ENCODE measurements at regions of chr12 and their contacts with region 1.

Region 1: GRCh38 chr12:26732005-26732908 is 100.7 kb downstream of the ITPR2 start:
- DNase-seq: peak; percentile 48
- H3K4me3 ChIP-seq: peak overlapping the region; percentile 8
- H3K27ac ChIP-seq: no peak overlapping the region
- H3K4me1 ChIP-seq: peaks cover 21% of the 10 kb centered on the region
- CTCF ChIP-seq: no peak

Region 2: GRCh38 chr12:26748741-26749431 is 16.6 kb after region 1 on chr12:
- CTCF ChIA-PET with region 1: no interaction called
- POLR2A ChIA-PET with region 1: interaction called, 12 read pairs
- intact Hi-C with region 1: no loop called
- DNase-seq: no peak
- H3K4me3 ChIP-seq: no peak overlapping the region
- H3K27ac ChIP-seq: no peak overlapping the region
- H3K4me1 ChIP-seq: no peaks in the 10 kb centered on the region
- CTCF ChIP-seq: no peak

Region 3: DNA sequence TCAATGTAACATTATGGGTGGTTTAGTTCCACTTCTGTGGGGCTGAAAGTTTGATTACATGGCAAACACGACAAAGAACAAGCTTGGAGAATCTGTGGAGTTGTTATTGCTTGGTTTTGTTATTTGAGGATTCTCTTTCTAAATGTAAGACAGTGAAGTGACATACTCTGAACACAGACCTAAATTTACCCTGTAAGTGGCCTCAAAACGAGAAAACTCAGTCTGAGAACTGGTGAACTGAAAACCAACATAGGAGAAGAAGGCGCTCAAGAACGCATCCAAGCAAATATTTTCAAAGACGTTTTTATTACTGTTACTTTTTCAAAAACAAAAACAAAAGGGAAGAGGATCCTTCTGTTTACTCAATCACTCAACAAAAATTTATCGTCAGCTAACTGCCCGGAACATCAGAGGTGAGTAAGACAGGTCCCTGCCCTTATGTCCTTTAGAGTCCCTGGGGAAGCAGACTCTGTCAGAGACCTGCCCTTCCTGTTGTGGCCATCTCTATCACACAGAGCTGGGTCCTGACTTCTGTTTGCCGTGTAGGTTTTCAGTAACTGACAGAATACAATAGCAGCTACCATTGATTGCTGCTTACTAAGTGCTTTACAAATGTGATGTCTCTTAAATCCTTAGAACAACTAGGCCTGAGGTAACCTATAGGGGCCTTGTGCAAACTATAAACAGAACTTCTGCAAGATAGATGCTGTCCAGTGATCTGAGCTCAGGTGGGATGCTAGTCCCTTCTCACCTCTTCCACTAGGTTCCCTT is 429.4 kb after region 1 on chr12:
- CTCF ChIA-PET with region 1: no interaction called
- POLR2A ChIA-PET with region 1: no interaction called
- intact Hi-C with region 1: no loop called
- DNase-seq: no peak
- H3K4me3 ChIP-seq: no peak overlapping the region
- H3K27ac ChIP-seq: no peak overlapping the region
- H3K4me1 ChIP-seq: no peaks in the 10 kb centered on the region
- CTCF ChIP-seq: no peak

Measured in OCI-LY7 (cell line).